PC-3 (cell line): ENCODE measurements at regions of chr3 and their contacts with region 1.

Region 1: GRCh38 chr3:31590650-31591049 is 57.9 kb downstream of the STT3B start:
- DNase-seq: no peak
- ATAC-seq: no peak
- H3K4me3 ChIP-seq: no peak overlapping the region
- H3K27ac ChIP-seq: no peak overlapping the region
- H3K4me1 ChIP-seq: no peaks in the 10 kb centered on the region
- H3K27me3 ChIP-seq: no peaks in the 10 kb centered on the region
- CTCF ChIP-seq: no peak

Region 2: DNA sequence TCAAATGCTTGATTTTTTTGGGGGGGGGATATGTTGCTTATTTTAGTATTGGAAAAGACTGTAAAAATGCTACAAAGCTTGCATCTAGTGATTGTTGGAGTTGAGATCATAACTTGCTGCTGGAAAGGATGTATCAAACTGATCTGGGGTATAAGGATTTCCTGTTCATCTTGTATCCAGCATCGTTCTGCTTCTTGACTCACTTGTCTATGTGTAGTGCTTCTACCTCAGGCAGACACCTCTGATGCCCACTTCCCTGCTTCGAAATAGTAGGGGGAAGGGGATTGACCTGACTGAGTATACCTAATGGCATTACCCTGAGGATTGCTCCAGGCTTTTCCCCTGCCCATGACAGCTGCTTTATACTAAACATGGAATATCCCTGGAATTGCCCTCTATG is 15.2 kb before region 1 on chr3:
- CTCF ChIA-PET with region 1: no interaction called
- POLR2A ChIA-PET with region 1: no interaction called
- intact Hi-C with region 1: loop called (anchors 2 kb)
- DNase-seq: no peak
- ATAC-seq: no peak
- H3K4me3 ChIP-seq: no peak overlapping the region
- H3K27ac ChIP-seq: no peak overlapping the region
- H3K4me1 ChIP-seq: 0 out of 2 replicates have a peak, but pooled peaks cover 2% of the 10 kb centered on the region
- H3K27me3 ChIP-seq: no peaks in the 10 kb centered on the region
- CTCF ChIP-seq: no peak

Region 3: DNA sequence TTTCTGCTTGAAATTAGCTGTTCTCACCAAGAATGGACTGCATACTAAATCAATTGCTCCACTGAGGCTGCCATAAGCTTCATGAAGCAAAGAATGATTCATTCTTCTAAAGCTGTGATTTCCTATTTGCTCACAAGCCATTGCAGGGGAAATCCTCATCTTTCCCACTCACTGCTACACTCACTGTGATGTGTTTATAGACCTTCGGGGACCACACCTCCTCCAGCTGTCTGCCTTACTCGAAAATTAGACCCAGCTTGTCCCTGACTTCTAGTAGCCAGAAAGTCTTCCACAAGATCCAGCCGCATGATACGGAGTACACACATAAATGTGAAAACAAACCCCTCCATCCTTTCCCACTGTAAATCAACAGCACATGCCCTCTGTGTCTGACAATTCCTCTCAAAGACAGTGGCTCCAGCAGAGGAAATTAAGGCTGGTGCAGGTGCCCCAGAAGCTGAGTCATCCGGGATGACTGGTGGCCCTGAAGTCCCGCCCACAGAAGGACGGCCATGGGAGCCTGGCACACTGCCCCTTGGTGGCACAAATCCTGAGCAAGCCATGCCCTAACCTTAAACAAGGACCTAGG is 114.0 kb after region 1 on chr3:
- CTCF ChIA-PET with region 1: no interaction called
- POLR2A ChIA-PET with region 1: no interaction called
- intact Hi-C with region 1: no loop called
- DNase-seq: peak; percentile 85
- ATAC-seq: peak; percentile 91
- H3K4me3 ChIP-seq: no peak overlapping the region
- H3K27ac ChIP-seq: peak overlapping the region; percentile 53
- H3K4me1 ChIP-seq: peaks cover 20% of the 10 kb centered on the region
- H3K27me3 ChIP-seq: no peaks in the 10 kb centered on the region
- CTCF ChIP-seq: peak; percentile 22; the same call in 1 of the 2 replicates